ENCODE measurements at regions of chr4 and their contacts with region 1.

Region 1: GRCh38 chr4:47383829-47384427 is 79.6 kb downstream of the COMMD8 start:
- DNase-seq: no peak
- H3K4me3 ChIP-seq: no peak overlapping the region
- H3K27ac ChIP-seq: no peak overlapping the region
- H3K4me1 ChIP-seq: no peaks in the 10 kb centered on the region
- H3K27me3 ChIP-seq: no peaks in the 10 kb centered on the region
- CTCF ChIP-seq: peak; percentile 80

Region 2: GRCh38 chr4:46586566-46586965 is 797.4 kb before region 1 on chr4:
- CTCF ChIA-PET with region 1: no interaction called
- POLR2A ChIA-PET with region 1: no interaction called
- intact Hi-C with region 1: no loop called
- DNase-seq: no peak
- H3K4me3 ChIP-seq: no peak overlapping the region
- H3K27ac ChIP-seq: no peak overlapping the region
- H3K4me1 ChIP-seq: no peaks in the 10 kb centered on the region
- H3K27me3 ChIP-seq: no peaks in the 10 kb centered on the region
- CTCF ChIP-seq: no peak

Region 3: GRCh38 chr4:46820154-46820553 is 563.8 kb before region 1 on chr4:
- CTCF ChIA-PET with region 1: no interaction called
- POLR2A ChIA-PET with region 1: interaction called, 12 read pairs
- intact Hi-C with region 1: no loop called
- DNase-seq: no peak
- H3K4me3 ChIP-seq: no peak overlapping the region
- H3K27ac ChIP-seq: no peak overlapping the region
- H3K4me1 ChIP-seq: no peaks in the 10 kb centered on the region
- H3K27me3 ChIP-seq: no peaks in the 10 kb centered on the region
- CTCF ChIP-seq: no peak

Region 4: DNA sequence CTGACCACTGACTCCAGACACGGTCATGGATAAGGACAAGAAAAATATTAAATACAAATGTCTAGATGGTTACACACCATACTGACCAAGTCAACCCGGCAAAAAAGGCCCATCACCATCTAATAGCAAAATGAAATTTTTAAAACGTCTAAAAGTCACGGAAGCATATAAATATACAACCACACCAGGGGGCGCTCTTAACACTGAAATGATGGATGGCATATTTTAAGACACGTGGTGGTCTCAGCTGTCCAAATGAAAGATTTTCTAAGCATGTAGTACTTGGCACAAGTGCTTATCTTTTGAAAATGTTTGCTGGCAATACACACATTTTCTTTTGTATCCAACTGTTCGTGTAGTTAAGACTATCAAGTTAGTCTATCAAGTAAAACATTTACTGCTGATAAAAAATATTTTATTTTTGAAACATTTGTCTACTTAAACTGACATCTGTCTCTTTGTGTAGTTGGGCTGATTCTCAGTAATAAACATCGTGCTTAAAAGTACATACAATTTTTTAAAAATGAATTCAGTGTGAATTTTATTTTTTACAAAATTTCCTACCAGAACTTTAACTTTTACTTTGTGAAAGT is 539.5 kb before region 1 on chr4:
- CTCF ChIA-PET with region 1: no interaction called
- POLR2A ChIA-PET with region 1: no interaction called
- intact Hi-C with region 1: loop called (anchors 1 kb)
- DNase-seq: peak in 1 of 2 experiments; percentile 15
- H3K4me3 ChIP-seq: no peak overlapping the region
- H3K27ac ChIP-seq: no peak overlapping the region
- H3K4me1 ChIP-seq: no peaks in the 10 kb centered on the region
- H3K27me3 ChIP-seq: no peaks in the 10 kb centered on the region
- CTCF ChIP-seq: peak; percentile 85

Region 5: GRCh38 chr4:46931981-46932380 is 451.9 kb before region 1 on chr4:
- CTCF ChIA-PET with region 1: no interaction called
- POLR2A ChIA-PET with region 1: no interaction called
- intact Hi-C with region 1: loop called (anchors 10 kb)
- DNase-seq: no peak
- H3K4me3 ChIP-seq: no peak overlapping the region
- H3K27ac ChIP-seq: no peak overlapping the region
- H3K4me1 ChIP-seq: peaks cover 10% of the 10 kb centered on the region; the same call in 1 of the 2 replicates
- H3K27me3 ChIP-seq: peaks cover 3% of the 10 kb centered on the region; the same call in 1 of the 2 replicates
- CTCF ChIP-seq: peak; percentile 40; the same call in 1 of the 2 replicates

Region 6: GRCh38 chr4:47510506-47511143 is 126.7 kb after region 1 on chr4:
- CTCF ChIA-PET with region 1: no interaction called
- POLR2A ChIA-PET with region 1: no interaction called
- intact Hi-C with region 1: no loop called
- DNase-seq: peak in 1 of 2 experiments; percentile 67
- H3K4me3 ChIP-seq: no peak overlapping the region
- H3K27ac ChIP-seq: peak overlapping the region; percentile 24
- H3K4me1 ChIP-seq: peaks cover 6% of the 10 kb centered on the region; the same call in 1 of the 2 replicates
- H3K27me3 ChIP-seq: no peaks in the 10 kb centered on the region
- CTCF ChIP-seq: peak; percentile 52; the same call in 1 of the 2 replicates

Region 7: DNA sequence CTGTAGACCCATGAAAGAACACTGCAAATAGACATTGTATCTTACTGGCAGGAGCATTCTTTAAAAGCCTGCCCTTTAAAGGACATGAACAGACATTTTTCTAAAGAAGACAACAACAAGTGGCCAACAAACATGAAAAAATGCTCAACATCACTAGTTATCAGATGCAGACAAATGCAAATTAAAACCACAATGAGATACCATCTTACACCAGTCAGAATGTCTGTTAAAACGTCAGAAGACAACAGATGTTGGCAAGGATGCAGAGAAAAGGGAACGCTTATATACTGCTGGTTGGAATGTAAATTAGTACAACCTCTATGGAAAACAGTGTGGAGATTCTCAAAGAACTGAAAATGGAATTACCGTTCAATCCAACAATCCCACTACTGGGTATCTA is 178.4 kb after region 1 on chr4:
- CTCF ChIA-PET with region 1: no interaction called
- POLR2A ChIA-PET with region 1: no interaction called
- intact Hi-C with region 1: loop called (anchors 2 kb)
- DNase-seq: no peak
- H3K4me3 ChIP-seq: no peak overlapping the region
- H3K27ac ChIP-seq: no peak overlapping the region
- H3K4me1 ChIP-seq: peaks cover 36% of the 10 kb centered on the region
- H3K27me3 ChIP-seq: no peaks in the 10 kb centered on the region
- CTCF ChIP-seq: no peak

Measured in PC-9 (cell line).